ENCODE measurements at regions of chr5 and their contacts with region 1.

Region 1: DNA sequence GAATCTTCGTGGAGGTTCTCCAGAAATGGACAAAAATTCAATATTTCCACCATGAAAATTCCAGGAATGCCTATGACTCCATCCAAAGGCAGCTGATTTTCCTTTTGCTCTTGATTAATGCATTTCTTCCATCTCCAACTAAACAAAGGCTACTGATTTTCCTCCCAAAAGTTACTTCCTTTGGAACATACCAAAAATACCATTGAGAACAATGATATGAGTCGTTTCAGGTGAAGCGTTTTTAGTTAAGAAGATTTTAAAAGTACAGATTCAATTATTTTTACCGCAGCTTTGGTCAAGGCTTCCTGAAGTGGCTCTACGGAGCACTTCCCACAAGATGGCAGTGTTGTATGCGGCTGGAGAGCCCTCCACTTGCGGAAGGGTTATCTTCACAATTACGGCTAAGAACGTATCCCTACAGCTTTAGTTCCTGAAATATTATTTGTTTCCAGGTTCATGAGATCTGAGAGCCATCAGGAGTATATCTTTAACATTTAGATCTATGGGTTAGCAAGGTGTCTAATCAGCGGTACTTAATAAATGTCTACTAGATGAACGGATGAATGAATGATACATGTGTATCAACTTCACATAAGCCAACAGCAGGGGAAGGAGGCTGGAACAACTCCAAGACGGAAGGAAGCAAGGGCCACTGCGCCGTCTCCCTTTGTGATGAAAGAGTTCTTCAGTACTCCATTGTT is 35.9 kb upstream of the ARSB start:
- DNase-seq: peak; percentile 54
- ATAC-seq: peak; percentile 64
- H3K4me3 Mint-ChIP-seq: no peak overlapping the region
- H3K27ac Mint-ChIP-seq: no peak overlapping the region
- H3K4me1 Mint-ChIP-seq: peaks cover 5% of the 10 kb centered on the region
- H3K27me3 Mint-ChIP-seq: peaks cover 53% of the 10 kb centered on the region

Region 2: DNA sequence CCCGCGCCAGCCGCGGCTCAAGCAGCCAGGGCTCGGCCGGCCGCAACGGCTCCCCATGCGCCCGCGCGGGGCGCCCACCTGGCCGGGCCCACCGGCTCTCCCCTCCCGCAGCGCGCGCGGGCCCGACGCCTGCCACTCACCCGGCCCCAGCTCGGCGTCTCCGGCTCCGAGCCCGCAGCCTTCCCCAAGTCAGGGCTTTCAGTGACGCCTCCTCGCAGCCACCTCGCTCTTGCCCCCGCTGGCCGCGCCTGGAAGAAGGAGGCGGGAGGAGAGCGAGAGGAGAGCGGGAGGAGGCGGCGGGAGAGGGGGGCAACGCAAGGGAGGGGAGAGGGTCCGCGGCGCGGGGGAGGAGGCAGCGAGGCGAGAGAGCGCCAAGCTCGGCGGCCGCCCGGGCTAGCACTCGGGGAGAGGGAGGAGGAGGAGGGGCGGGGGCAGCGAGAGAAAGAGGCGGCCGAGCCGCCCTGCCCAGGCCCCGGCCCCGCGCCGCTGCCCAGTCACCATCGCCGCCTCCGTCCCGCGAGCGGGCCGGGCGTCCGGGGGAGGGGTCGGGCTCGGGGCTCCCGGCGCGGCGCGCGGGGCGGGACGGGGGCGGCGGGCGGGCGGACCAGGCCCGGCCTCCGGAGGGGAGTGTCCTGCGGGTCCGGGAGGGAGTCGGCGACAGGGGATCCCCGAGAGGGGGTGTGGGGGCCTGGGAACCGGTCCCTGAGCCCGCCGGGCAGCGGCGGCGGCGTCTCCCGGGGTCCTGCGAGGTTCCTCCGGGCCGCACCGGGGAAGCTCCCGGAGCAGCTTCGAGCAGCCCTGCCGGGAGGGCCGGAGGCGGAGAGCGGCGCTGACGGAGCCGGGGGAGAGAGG is 372.4 kb before region 1 on chr5 and contains the start of gene LHFPL2:
- CTCF ChIA-PET with region 1: no interaction called
- POLR2A ChIA-PET with region 1: no interaction called
- DNase-seq: peak; percentile 27
- ATAC-seq: peak; percentile 74
- H3K4me3 Mint-ChIP-seq: peak within 1 kb of the TSS; percentile 65
- H3K27ac Mint-ChIP-seq: peak within 1 kb of the TSS; percentile 6
- H3K4me1 Mint-ChIP-seq: peaks cover 11% of the 10 kb centered on the region
- H3K27me3 Mint-ChIP-seq: peaks cover 50% of the 10 kb centered on the region
- total RNA-seq, gene LHFPL2: 0.34 TPM in 1 of 2 experiments, not detected in the other

Region 3: DNA sequence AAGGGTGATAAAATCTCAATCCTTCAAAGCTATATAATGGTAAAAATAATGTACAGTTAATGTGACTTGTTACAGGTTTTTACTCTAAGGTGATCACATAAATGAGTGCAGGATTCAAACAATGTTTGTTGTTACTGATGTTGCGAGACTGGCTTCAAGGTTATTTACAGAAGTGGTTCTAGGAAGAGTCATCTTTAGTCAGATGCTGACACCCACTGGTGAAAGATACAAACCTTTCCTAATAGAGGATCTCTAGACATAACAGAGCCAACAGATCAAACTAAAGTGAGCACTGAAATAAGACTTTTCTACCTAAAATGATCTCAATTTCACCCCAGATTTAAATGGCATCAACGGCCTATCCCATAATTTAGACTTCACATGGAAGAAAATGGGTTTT is 56.1 kb before region 1 on chr5:
- CTCF ChIA-PET with region 1: interaction called, 10 read pairs
- POLR2A ChIA-PET with region 1: no interaction called
- DNase-seq: no peak
- ATAC-seq: no peak
- H3K4me3 Mint-ChIP-seq: no peak overlapping the region
- H3K27ac Mint-ChIP-seq: no peak overlapping the region
- H3K4me1 Mint-ChIP-seq: no peaks in the 10 kb centered on the region
- H3K27me3 Mint-ChIP-seq: no peaks in the 10 kb centered on the region

Region 4: GRCh38 chr5:78993165-78993564 is 27.8 kb before region 1 on chr5:
- CTCF ChIA-PET with region 1: interaction called, 15 read pairs
- POLR2A ChIA-PET with region 1: no interaction called
- DNase-seq: no peak
- ATAC-seq: peak; percentile 74
- H3K4me3 Mint-ChIP-seq: no peak overlapping the region
- H3K27ac Mint-ChIP-seq: peak overlapping the region; percentile 6
- H3K4me1 Mint-ChIP-seq: peaks cover 19% of the 10 kb centered on the region
- H3K27me3 Mint-ChIP-seq: peaks cover 11% of the 10 kb centered on the region

Region 5: GRCh38 chr5:79048437-79048836 is 27.4 kb after region 1 on chr5:
- CTCF ChIA-PET with region 1: interaction called, 11 read pairs
- POLR2A ChIA-PET with region 1: no interaction called
- DNase-seq: no peak
- ATAC-seq: no peak
- H3K4me3 Mint-ChIP-seq: no peak overlapping the region
- H3K27ac Mint-ChIP-seq: no peak overlapping the region
- H3K4me1 Mint-ChIP-seq: no peaks in the 10 kb centered on the region
- H3K27me3 Mint-ChIP-seq: peaks cover 16% of the 10 kb centered on the region

Region 6: GRCh38 chr5:79107020-79107796 is 86.2 kb after region 1 on chr5:
- CTCF ChIA-PET with region 1: interaction called, 45 read pairs
- POLR2A ChIA-PET with region 1: no interaction called
- DNase-seq: no peak
- ATAC-seq: no peak
- H3K4me3 Mint-ChIP-seq: no peak overlapping the region
- H3K27ac Mint-ChIP-seq: no peak overlapping the region
- H3K4me1 Mint-ChIP-seq: peaks cover 8% of the 10 kb centered on the region
- H3K27me3 Mint-ChIP-seq: peaks cover 36% of the 10 kb centered on the region

Region 7: GRCh38 chr5:79225026-79225425 is 204.0 kb after region 1 on chr5:
- CTCF ChIA-PET with region 1: no interaction called
- POLR2A ChIA-PET with region 1: no interaction called
- DNase-seq: no peak
- ATAC-seq: no peak
- H3K4me3 Mint-ChIP-seq: no peak overlapping the region
- H3K27ac Mint-ChIP-seq: no peak overlapping the region
- H3K4me1 Mint-ChIP-seq: peaks cover 8% of the 10 kb centered on the region
- H3K27me3 Mint-ChIP-seq: no peaks in the 10 kb centered on the region

Region 8: DNA sequence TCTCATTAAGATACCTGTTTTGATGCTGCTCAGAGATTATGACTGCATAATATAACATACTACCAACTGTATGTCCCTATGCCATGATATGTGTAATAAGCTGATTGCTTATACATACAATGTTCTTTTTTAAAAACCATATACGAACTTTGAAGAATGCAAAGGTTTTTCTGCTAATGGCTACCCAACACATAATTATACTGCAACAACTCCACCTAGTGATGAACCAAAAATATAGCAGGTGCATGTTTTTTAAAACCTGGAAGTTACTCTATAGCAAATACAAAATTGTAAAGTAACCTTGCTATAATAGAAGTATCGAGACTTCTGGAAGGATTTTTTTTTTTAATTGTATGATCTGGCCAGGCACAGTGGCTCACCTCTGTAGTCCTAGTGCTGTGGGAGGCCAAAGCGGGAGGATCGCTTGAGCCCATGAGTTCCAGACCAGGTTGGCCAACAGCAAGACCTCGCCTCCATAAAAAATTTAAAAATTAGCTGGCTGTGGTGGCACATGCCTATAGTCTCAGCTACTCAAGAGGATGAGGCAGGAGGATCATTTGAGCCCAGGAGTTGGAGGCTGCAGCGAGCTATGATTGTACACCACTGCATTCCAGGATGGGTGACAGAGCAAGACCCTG is 443.8 kb after region 1 on chr5:
- CTCF ChIA-PET with region 1: interaction called, 15 read pairs
- POLR2A ChIA-PET with region 1: no interaction called
- DNase-seq: no peak
- ATAC-seq: no peak
- H3K4me3 Mint-ChIP-seq: no peak overlapping the region
- H3K27ac Mint-ChIP-seq: no peak overlapping the region
- H3K4me1 Mint-ChIP-seq: peaks cover 4% of the 10 kb centered on the region
- H3K27me3 Mint-ChIP-seq: no peaks in the 10 kb centered on the region

Measured in activated CD8-positive, alpha-beta T cell treated with anti-CD3 and anti-CD28 coated beads, Interleukin-2, amount 10 ng/mL, durations not matched to agents 7 days and 5 days (primary cell).